CD4-positive, alpha-beta memory T cell (primary cell): ENCODE measurements at regions of chr16 and their contacts with region 1.

Region 1: DNA sequence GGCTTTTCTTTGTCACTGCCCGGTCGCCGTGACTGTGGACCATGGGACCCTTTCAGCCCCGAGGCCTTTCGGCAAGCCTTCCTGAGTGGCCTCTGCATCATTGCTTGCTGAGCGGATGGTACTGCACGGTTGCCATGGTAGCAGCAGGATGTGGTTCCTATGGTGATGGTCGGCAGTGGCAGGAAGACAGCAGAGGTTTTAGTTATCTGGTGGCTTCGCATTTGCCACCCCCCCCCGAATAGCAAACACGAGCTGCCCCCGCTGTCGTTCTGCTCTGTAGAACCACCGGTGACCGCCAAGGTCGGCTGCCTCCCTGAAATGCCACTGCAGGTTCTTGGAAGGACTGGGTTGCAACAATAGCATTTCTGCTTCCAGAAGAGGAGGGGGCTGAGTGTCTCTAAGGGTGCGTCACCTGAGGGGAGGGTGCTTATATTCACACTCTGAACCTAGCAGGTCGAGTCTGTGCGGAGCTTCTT is 76.6 kb downstream of the CMIP start:
- DNase-seq: peak; percentile 84 to 90 (median 87)
- H3K4me3 ChIP-seq: no peak overlapping the region
- H3K4me3 Mint-ChIP-seq: peak overlapping the region; percentile 15 to 72 (median 58)
- H3K27ac ChIP-seq: peak overlapping the region; percentile 63
- H3K27ac Mint-ChIP-seq: peak overlapping the region; percentile 93 to 98 (median 97)
- H3K4me1 ChIP-seq: peaks cover 51% of the 10 kb centered on the region
- H3K4me1 Mint-ChIP-seq: peaks cover 28 to 64% (median 50%) of the 10 kb centered on the region in 4 donors
- H3K27me3 ChIP-seq: no peaks in the 10 kb centered on the region
- H3K27me3 Mint-ChIP-seq: no peaks in the 10 kb centered on the region

Region 2: DNA sequence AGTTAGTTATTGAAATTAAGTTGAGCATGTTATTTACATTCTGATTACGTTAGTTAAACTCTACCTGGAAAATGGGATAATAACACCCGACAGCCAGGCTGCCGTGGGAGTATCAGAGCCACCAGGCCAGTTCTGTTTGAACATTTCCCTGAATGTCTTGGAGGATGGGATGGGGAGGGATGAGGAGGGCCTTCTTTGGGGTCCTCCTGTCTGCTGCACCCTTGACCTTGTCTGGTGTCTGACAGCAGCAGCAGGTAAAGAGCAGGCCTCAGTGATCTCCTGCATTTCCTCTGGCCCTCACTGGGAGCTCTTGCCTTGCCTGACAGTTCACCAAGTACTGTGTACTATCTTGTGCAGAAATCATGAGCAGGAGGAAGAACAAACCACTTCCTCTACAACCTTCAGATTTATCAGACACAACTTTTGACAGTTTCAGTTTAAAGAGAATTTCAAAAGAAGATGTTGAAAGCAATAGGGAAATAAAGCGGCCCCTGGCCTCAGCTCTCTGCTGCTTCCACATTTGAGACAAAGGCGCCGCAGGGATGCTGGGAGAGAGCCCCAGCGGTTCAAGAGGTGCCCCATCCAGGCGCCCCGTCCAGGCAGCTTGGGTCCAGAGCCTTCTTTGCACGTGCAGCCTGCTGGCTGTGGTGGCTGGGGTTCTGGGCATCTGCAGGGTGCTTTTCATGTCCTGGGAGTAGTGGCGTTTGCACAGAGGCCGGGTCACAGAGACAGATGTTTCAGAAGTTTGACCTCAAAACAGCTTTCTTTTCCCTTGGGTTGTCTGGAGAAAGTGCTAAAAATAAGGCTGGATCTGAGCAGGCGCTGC is 51.3 kb before region 1 on chr16:
- CTCF ChIA-PET with region 1: no interaction called
- POLR2A ChIA-PET with region 1: interaction called, 6 read pairs
- intact Hi-C with region 1: loop called (anchors 5 kb)
- DNase-seq: peak; percentile 56 to 76 (median 70)
- H3K4me3 ChIP-seq: peak overlapping the region in 1 of 2 donors; percentile 48
- H3K4me3 Mint-ChIP-seq: peak overlapping the region; percentile 76 to 88 (median 80)
- H3K27ac ChIP-seq: peak overlapping the region; percentile 48
- H3K27ac Mint-ChIP-seq: peak overlapping the region; percentile 88 to 97 (median 94)
- H3K4me1 ChIP-seq: peaks cover 81% of the 10 kb centered on the region
- H3K4me1 Mint-ChIP-seq: peaks cover 47 to 80% (median 67%) of the 10 kb centered on the region in 4 donors
- H3K27me3 ChIP-seq: no peaks in the 10 kb centered on the region
- H3K27me3 Mint-ChIP-seq: no peaks in the 10 kb centered on the region

Region 3: DNA sequence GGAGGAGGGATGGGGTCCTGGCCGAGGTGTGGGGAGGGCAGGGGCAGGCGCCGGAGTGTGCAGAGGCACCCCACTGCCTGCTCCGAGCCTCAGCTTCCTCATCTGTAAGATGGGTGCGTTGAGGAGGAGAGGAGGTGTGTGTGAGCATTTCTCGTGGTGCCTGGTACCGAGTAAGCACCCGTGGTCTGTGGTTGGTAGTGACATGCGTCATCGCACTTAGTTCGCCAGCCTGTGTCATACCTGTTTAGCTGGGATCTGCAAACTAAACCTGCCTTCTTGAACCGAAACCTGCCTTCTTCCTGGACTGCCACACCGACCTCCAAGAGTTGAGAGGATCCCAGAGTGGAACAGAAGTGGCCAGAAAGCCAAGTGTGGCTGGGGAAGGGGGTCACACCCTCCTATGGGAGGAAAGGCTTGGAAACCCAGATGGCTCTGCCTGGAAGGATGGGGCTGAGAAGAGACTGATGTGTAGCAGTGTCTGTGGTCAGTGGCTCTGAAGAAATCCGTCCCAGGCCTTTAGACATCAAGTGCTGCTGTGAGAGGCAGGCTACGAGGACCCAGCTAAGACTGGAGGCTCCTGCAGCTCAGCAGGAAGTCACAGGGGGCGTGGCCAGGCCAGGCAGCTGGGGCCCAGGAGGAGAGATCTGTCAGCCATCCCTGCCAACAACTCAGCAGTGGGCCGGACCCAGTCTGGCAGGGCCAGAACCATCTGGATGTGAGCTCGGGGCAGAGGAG is 95.3 kb after region 1 on chr16:
- CTCF ChIA-PET with region 1: interaction called, 6 read pairs
- POLR2A ChIA-PET with region 1: interaction called, 6 read pairs
- intact Hi-C with region 1: loop called (anchors 5 kb)
- DNase-seq: peak; percentile 75 to 89 (median 84)
- H3K4me3 ChIP-seq: peak overlapping the region; percentile 10 to 53
- H3K4me3 Mint-ChIP-seq: peak overlapping the region; percentile 63 to 82 (median 76)
- H3K27ac ChIP-seq: peak overlapping the region; percentile 75
- H3K27ac Mint-ChIP-seq: peak overlapping the region in 2 of 7 donors; percentile 96 to 97
- H3K4me1 ChIP-seq: peaks cover 25% of the 10 kb centered on the region
- H3K4me1 Mint-ChIP-seq: peaks cover 9 to 19% (median 12%) of the 10 kb centered on the region in 4 donors
- H3K27me3 ChIP-seq: no peaks in the 10 kb centered on the region
- H3K27me3 Mint-ChIP-seq: no peaks in the 10 kb centered on the region